ENCODE measurements at regions of chr7 and their contacts with region 1.

Region 1: GRCh38 chr7:63925623-63926460 is 72.8 kb upstream of the ZNF722 start:
- DNase-seq: peak; percentile 88 to 94
- ATAC-seq: peak; percentile 66 to 96 (median 93)
- H3K4me3 ChIP-seq: peak overlapping the region; percentile 75
- H3K4me3 Mint-ChIP-seq: peak overlapping the region; percentile 97
- H3K27ac ChIP-seq: peak overlapping the region; percentile 84
- H3K27ac Mint-ChIP-seq: peak overlapping the region; percentile 92 to 96
- H3K4me1 ChIP-seq: peaks cover 17% of the 10 kb centered on the region
- H3K4me1 Mint-ChIP-seq: peaks cover 9 to 23% of the 10 kb centered on the region in 2 donors
- H3K27me3 ChIP-seq: no peaks in the 10 kb centered on the region
- H3K27me3 Mint-ChIP-seq: no peaks in the 10 kb centered on the region
- CTCF ChIP-seq: no peak

Region 2: GRCh38 chr7:63900394-63901203 is 25.2 kb before region 1 on chr7:
- intact Hi-C with region 1: loop called (anchors 1 kb)
- DNase-seq: peak; percentile 86 to 93
- ATAC-seq: peak; percentile 46 to 96 (median 93)
- H3K4me3 ChIP-seq: peak overlapping the region; percentile 82
- H3K4me3 Mint-ChIP-seq: peak overlapping the region; percentile 95
- H3K27ac ChIP-seq: peak overlapping the region; percentile 81
- H3K27ac Mint-ChIP-seq: peak overlapping the region; percentile 84 to 87
- H3K4me1 ChIP-seq: peaks cover 19% of the 10 kb centered on the region
- H3K4me1 Mint-ChIP-seq: peaks cover 0 to 27% of the 10 kb centered on the region in 2 donors
- H3K27me3 ChIP-seq: no peaks in the 10 kb centered on the region
- H3K27me3 Mint-ChIP-seq: no peaks in the 10 kb centered on the region
- CTCF ChIP-seq: no peak

Region 3: DNA sequence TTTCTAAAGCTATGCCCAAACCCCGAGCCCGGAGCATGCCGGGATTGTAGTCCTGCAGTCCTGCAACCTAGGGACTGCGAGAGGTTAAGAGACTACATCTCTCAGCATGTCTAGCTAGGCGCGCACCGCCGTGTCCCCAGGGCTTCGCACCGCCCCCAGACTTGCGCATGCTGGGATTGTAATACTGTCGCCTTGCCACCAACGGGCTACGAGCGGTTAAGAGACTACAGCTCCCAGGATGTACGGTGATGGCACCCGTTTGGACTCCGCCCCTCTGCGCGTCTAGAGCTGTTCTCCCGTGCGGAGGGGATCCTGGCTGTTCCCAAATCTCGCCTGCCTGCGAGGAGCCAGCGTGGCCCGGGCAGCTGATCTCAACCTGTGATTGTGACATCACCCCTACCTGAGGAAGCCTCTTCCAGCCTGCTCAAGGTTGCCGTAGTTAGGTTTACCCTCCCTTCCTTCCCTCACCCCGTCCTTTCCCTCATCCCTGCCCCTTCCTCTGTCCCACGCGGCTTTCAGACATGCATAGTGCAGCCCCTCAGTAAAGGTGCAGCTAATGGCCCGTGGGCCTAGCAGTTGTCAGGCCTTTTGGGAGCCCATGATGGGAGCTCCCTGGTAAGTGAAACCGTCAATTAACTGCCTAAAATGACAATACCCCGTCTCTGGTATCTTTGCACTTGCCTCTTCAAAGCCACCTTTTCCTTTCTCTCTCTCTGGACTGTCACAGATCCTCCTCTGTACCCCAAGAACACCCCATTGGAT is 381.6 kb after region 1 on chr7:
- intact Hi-C with region 1: loop called (anchors 1 kb)
- DNase-seq: peak; percentile 82 to 96
- ATAC-seq: peak; percentile 96 to 100 (median 98)
- H3K4me3 ChIP-seq: peak overlapping the region; percentile 68
- H3K4me3 Mint-ChIP-seq: peak overlapping the region; percentile 100
- H3K27ac ChIP-seq: peak overlapping the region; percentile 85
- H3K27ac Mint-ChIP-seq: peak overlapping the region; percentile 96 to 97
- H3K4me1 ChIP-seq: peaks cover 21% of the 10 kb centered on the region
- H3K4me1 Mint-ChIP-seq: peaks cover 15 to 21% of the 10 kb centered on the region in 2 donors
- H3K27me3 ChIP-seq: no peaks in the 10 kb centered on the region
- H3K27me3 Mint-ChIP-seq: no peaks in the 10 kb centered on the region
- CTCF ChIP-seq: peak; percentile 19

Region 4: GRCh38 chr7:64562626-64563275 is 636.9 kb after region 1 on chr7 and contains the start of gene ZNF680:
- intact Hi-C with region 1: loop called (anchors 2 kb)
- DNase-seq: peak; percentile 88 to 91
- ATAC-seq: peak; percentile 98 to 99 (median 99)
- H3K4me3 ChIP-seq: peak within 1 kb of the TSS; percentile 86
- H3K4me3 Mint-ChIP-seq: peak within 1 kb of the TSS; percentile 100
- H3K27ac ChIP-seq: peak within 1 kb of the TSS; percentile 69
- H3K27ac Mint-ChIP-seq: peak within 1 kb of the TSS; percentile 94 to 97
- H3K4me1 ChIP-seq: peaks cover 7% of the 10 kb centered on the region
- H3K4me1 Mint-ChIP-seq: peaks cover 31 to 41% of the 10 kb centered on the region in 2 donors
- H3K27me3 ChIP-seq: no peaks in the 10 kb centered on the region
- H3K27me3 Mint-ChIP-seq: no peaks in the 10 kb centered on the region
- CTCF ChIP-seq: no peak
- total RNA-seq, gene ZNF680: 8.9 to 17.9 (median 10.2) TPM

Region 5: DNA sequence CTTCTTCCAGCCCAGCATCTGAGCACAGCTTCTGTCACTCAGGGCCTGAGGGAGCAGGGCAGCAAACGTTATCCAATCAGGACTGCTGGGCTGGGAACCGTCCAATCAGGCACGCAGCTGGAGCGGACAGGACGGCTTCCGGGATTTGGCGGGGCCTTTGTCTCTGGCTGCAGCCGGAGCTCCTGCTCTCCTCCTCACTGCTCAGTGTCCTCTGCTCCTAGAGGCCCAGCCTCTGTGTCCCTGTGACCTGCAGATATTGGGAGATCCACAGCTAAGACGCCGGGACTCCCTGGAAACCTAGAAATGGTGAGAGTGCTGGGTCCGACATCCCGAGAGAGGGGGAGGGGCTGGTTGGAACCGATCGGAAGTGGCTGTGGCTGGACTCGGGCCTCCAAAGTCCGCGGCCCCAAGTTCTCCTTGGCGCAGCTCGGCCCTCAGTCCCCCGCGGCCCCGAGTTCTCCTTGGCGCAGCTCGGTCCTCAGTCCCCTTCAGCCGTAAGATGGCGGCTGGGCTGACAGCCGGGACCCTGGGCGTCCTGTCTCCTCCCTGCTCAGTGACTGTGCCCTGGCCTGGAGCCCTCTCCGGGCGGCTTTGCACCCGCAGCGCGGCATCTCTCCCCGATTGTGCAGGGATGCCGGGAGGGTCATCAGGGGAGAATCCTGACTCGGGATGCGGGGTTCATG is 740.3 kb after region 1 on chr7 and contains the start of gene ZNF107:
- intact Hi-C with region 1: loop called (anchors 1 kb)
- DNase-seq: peak; percentile 81 to 92
- ATAC-seq: peak; percentile 97 to 100 (median 98)
- H3K4me3 ChIP-seq: peak within 1 kb of the TSS; percentile 95
- H3K4me3 Mint-ChIP-seq: peak within 1 kb of the TSS; percentile 97
- H3K27ac ChIP-seq: peak within 1 kb of the TSS; percentile 93
- H3K27ac Mint-ChIP-seq: peak within 1 kb of the TSS; percentile 90 to 93
- H3K4me1 ChIP-seq: peaks cover 13% of the 10 kb centered on the region
- H3K4me1 Mint-ChIP-seq: peaks cover 30 to 44% of the 10 kb centered on the region in 2 donors
- H3K27me3 ChIP-seq: no peaks in the 10 kb centered on the region
- H3K27me3 Mint-ChIP-seq: no peaks in the 10 kb centered on the region
- CTCF ChIP-seq: no peak
- total RNA-seq, gene ZNF107: 10.3 to 13.3 (median 10.4) TPM

Region 6: GRCh38 chr7:64706625-64707292 is 780.9 kb after region 1 on chr7:
- intact Hi-C with region 1: no loop called
- DNase-seq: no peak
- ATAC-seq: no peak
- H3K4me3 ChIP-seq: no peak overlapping the region
- H3K4me3 Mint-ChIP-seq: no peak overlapping the region
- H3K27ac ChIP-seq: no peak overlapping the region
- H3K27ac Mint-ChIP-seq: no peak overlapping the region
- H3K4me1 ChIP-seq: no peaks in the 10 kb centered on the region
- H3K4me1 Mint-ChIP-seq: no peaks in the 10 kb centered on the region
- H3K27me3 ChIP-seq: no peaks in the 10 kb centered on the region
- H3K27me3 Mint-ChIP-seq: no peaks in the 10 kb centered on the region
- CTCF ChIP-seq: no peak

Region 7: GRCh38 chr7:64794171-64794844 is 868.5 kb after region 1 on chr7 and contains the start of gene ZNF138:
- intact Hi-C with region 1: loop called (anchors 1 kb)
- DNase-seq: peak; percentile 91 to 96
- ATAC-seq: peak; percentile 98 to 99 (median 99)
- H3K4me3 ChIP-seq: peak within 1 kb of the TSS; percentile 94
- H3K4me3 Mint-ChIP-seq: peak within 1 kb of the TSS; percentile 98
- H3K27ac ChIP-seq: peak within 1 kb of the TSS; percentile 92
- H3K27ac Mint-ChIP-seq: peak within 1 kb of the TSS; percentile 96 to 98
- H3K4me1 ChIP-seq: peaks cover 16% of the 10 kb centered on the region
- H3K4me1 Mint-ChIP-seq: peaks cover 17 to 21% of the 10 kb centered on the region in 2 donors
- H3K27me3 ChIP-seq: no peaks in the 10 kb centered on the region
- H3K27me3 Mint-ChIP-seq: peaks cover 0 to 3% of the 10 kb centered on the region in 2 donors
- CTCF ChIP-seq: no peak
- total RNA-seq, gene ZNF138: 6.0 to 11.4 (median 8.0) TPM

Region 8: GRCh38 chr7:64902806-64903721 is 977.2 kb after region 1 on chr7 and contains the start of gene ZNF273:
- intact Hi-C with region 1: loop called (anchors 5 kb)
- DNase-seq: peak; percentile 92 to 94
- ATAC-seq: peak; percentile 98 to 100 (median 99)
- H3K4me3 ChIP-seq: peak within 1 kb of the TSS; percentile 67
- H3K4me3 Mint-ChIP-seq: peak within 1 kb of the TSS; percentile 97
- H3K27ac ChIP-seq: peak within 1 kb of the TSS; percentile 43
- H3K27ac Mint-ChIP-seq: peak within 1 kb of the TSS; percentile 87 to 94
- H3K4me1 ChIP-seq: peaks cover 12% of the 10 kb centered on the region
- H3K4me1 Mint-ChIP-seq: peaks cover 42 to 48% of the 10 kb centered on the region in 2 donors
- H3K27me3 ChIP-seq: no peaks in the 10 kb centered on the region
- H3K27me3 Mint-ChIP-seq: no peaks in the 10 kb centered on the region
- CTCF ChIP-seq: no peak
- total RNA-seq, gene ZNF273: 2.9 to 4.2 (median 4.0) TPM

Measured in natural killer cell (primary cell).